ENCODE measurements at regions of chr19 and their contacts with region 1.

Region 1: DNA sequence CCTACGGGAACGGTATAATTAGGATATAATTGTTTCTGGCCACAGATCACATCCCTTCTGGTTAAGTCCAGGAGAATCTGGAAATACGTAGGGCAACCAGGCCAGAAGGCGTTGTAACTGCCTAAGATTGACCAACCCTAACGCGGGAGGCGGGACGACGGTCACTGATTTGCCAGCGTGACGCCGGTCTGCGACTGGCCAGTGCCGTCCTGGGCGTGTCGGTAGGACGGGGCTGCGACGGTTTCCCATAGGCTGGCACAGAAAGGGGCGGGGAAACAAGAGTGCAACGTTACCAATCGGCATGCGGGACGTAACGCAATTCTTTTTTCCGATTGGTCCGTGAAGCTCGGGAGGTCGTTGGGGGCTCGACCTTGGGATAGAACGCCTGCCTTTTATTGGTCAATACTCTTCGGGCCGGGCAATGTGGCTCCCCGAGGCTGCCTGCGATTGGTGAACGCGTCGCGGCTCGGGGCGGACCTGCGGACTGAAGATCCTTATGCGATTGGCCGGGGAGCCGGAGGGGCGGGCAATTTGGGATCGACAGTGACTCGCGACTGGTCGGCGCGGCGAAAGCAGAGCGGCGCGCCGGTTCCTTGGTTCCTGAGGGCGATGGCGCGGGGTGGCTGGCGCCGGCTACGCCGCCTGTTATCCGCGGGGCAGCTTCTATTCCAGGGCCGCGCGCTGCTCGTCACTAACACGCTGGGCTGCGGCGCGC is at the start of gene MPV17L2:
- DNase-seq: peak; percentile 96
- ATAC-seq: peak; percentile 95
- H3K4me3 Mint-ChIP-seq: peak within 1 kb of the TSS; percentile 89
- H3K27ac Mint-ChIP-seq: peak within 1 kb of the TSS; percentile 88
- H3K4me1 Mint-ChIP-seq: peaks cover 15% of the 10 kb centered on the region
- H3K27me3 Mint-ChIP-seq: no peaks in the 10 kb centered on the region
- total RNA-seq, gene MPV17L2: 5.8 to 6.5 TPM

Region 2: GRCh38 chr19:18203863-18204393 is 11.1 kb after region 1 on chr19 and contains the start of gene RAB3A:
- POLR2A ChIA-PET with region 1: interaction called, 15 read pairs
- DNase-seq: peak; percentile 98
- ATAC-seq: peak; percentile 92
- H3K4me3 Mint-ChIP-seq: peak within 1 kb of the TSS; percentile 93
- H3K27ac Mint-ChIP-seq: peak within 1 kb of the TSS; percentile 93
- H3K4me1 Mint-ChIP-seq: peaks cover 11% of the 10 kb centered on the region
- H3K27me3 Mint-ChIP-seq: peaks cover 10% of the 10 kb centered on the region
- total RNA-seq, gene RAB3A: 3.0 to 6.1 TPM

Measured in activated naive CD8-positive, alpha-beta T cell treated with anti-CD3 and anti-CD28 coated beads, Interleukin-2, amount 10 ng/mL, durations not matched to agents 7 days and 5 days (primary cell).